Mammary epithelial cell (primary cell): ENCODE measurements at regions of chr17 and their contacts with region 1.

Region 1: DNA sequence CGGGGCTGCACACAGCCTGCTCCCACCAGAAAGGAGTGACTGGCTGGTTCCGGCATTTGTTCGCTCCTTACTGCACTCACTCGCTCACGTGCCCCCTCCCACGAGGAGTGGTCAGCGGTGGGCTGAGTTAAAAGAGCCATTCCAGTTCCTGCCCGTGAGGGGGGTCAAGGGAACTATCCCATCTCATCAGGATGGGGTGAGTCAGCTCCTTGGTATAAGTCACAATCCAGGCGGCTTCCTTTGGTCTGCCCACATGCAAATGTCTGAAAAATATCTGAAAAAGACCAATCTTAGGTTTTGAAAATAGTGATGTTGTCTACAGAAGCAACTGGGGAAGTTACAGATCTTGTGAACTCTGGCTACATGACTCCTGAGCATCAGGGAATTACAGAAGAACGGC is 10.0 kb upstream of the TNFSF12 start:
- DNase-seq: no peak
- H3K4me3 ChIP-seq: no peak overlapping the region
- H3K27ac ChIP-seq: no peak overlapping the region
- H3K4me1 ChIP-seq: no peaks in the 10 kb centered on the region
- H3K27me3 ChIP-seq: no peaks in the 10 kb centered on the region
- CTCF ChIP-seq: no peak

Region 2: GRCh38 chr17:7462474-7463371 is 76.2 kb before region 1 on chr17:
- CTCF ChIA-PET with region 1: no interaction called
- dilution Hi-C with region 1: loop called (anchors 5 kb)
- in situ Hi-C with region 1: no loop called
- intact Hi-C with region 1: no loop called
- DNase-seq: no peak
- H3K4me3 ChIP-seq: no peak overlapping the region
- H3K27ac ChIP-seq: no peak overlapping the region
- H3K4me1 ChIP-seq: peaks cover 37% of the 10 kb centered on the region
- H3K27me3 ChIP-seq: no peaks in the 10 kb centered on the region
- CTCF ChIP-seq: no peak

Region 3: GRCh38 chr17:7515911-7516610 is 22.8 kb before region 1 on chr17:
- CTCF ChIA-PET with region 1: interaction called, 10 read pairs
- dilution Hi-C with region 1: no loop called
- in situ Hi-C with region 1: no loop called
- intact Hi-C with region 1: no loop called
- DNase-seq: no peak
- H3K4me3 ChIP-seq: no peak overlapping the region
- H3K27ac ChIP-seq: no peak overlapping the region
- H3K4me1 ChIP-seq: no peaks in the 10 kb centered on the region
- H3K27me3 ChIP-seq: no peaks in the 10 kb centered on the region
- CTCF ChIP-seq: no peak

Region 4: GRCh38 chr17:7572588-7573323 is 33.9 kb after region 1 on chr17:
- CTCF ChIA-PET with region 1: no interaction called
- dilution Hi-C with region 1: loop called (anchors 5 kb)
- in situ Hi-C with region 1: no loop called
- intact Hi-C with region 1: no loop called
- DNase-seq: peak; percentile 99
- H3K4me3 ChIP-seq: peak overlapping the region; percentile 95 to 98 (median 98)
- H3K27ac ChIP-seq: peak overlapping the region; percentile 95
- H3K4me1 ChIP-seq: peaks cover 38% of the 10 kb centered on the region
- H3K27me3 ChIP-seq: no peaks in the 10 kb centered on the region
- CTCF ChIP-seq: no peak

Region 5: GRCh38 chr17:7644775-7645174 is 105.9 kb after region 1 on chr17:
- CTCF ChIA-PET with region 1: no interaction called
- dilution Hi-C with region 1: loop called (anchors 5 kb)
- in situ Hi-C with region 1: no loop called
- intact Hi-C with region 1: no loop called
- DNase-seq: no peak
- H3K4me3 ChIP-seq: no peak overlapping the region
- H3K27ac ChIP-seq: no peak overlapping the region
- H3K4me1 ChIP-seq: no peaks in the 10 kb centered on the region
- H3K27me3 ChIP-seq: no peaks in the 10 kb centered on the region
- CTCF ChIP-seq: no peak